ENCODE measurements at regions of chr19 and their contacts with region 1.

Region 1: DNA sequence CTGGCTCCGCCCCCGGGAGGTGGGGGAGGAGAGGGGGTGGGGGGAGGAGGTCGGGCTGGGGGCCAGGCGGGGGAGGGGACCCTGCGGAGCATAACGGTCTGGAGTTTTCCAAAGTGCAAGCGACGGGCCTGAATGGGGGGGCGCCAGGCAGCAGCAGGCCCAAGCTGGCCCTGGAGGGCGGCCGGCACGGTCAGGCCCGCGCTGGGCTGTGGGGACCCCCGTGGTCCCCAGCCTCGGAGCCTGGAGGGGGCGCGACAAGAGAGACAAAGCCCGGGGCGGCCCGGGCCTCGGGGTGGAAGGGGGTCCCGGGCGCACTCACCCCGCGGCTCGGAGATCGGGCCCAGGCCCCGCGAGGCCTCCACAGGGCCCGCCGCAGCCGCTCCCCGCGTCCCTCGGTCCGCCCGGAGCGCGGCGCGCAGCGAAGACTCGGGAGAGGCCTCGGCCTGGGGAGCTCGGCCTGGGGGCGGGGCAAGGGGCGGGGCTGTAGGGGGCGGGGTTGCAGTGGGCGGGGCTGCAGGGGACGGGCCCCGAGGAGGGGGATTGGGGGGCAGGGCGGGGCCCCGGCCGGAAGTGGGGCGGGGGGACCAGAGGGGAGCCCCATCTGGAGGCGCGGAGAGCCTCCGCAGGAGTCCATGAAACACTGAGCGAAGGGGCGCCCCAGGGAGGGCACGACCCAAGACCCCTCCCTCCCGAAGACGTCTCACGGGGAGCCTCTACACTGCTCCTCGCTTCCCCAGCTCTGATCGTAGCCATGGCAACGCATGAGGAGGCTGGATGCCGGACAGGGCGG is 47.6 kb downstream of the PTPRS start:
- DNase-seq: peak; percentile 52 to 79 (median 62)
- H3K4me3 ChIP-seq: peak overlapping the region; percentile 61 to 92 (median 82)
- H3K27ac ChIP-seq: peak overlapping the region; percentile 58 to 99 (median 93)
- H3K27me3 ChIP-seq: no peaks in the 10 kb centered on the region
- CTCF ChIP-seq: peak in 8 of 56 donors; percentile 4 to 16 (median 8)

Region 2: GRCh38 chr19:5228932-5229777 is 63.9 kb before region 1 on chr19:
- intact Hi-C with region 1: no loop called
- DNase-seq: peak in 1 of 10 donors; percentile 26
- H3K4me3 ChIP-seq: peak overlapping the region in 43 of 59 donors; percentile 7 to 56 (median 33)
- H3K27ac ChIP-seq: peak overlapping the region in 5 of 59 donors; percentile 28 to 64 (median 40)
- H3K27me3 ChIP-seq: no peaks in the 10 kb centered on the region
- CTCF ChIP-seq: no peak

Region 3: DNA sequence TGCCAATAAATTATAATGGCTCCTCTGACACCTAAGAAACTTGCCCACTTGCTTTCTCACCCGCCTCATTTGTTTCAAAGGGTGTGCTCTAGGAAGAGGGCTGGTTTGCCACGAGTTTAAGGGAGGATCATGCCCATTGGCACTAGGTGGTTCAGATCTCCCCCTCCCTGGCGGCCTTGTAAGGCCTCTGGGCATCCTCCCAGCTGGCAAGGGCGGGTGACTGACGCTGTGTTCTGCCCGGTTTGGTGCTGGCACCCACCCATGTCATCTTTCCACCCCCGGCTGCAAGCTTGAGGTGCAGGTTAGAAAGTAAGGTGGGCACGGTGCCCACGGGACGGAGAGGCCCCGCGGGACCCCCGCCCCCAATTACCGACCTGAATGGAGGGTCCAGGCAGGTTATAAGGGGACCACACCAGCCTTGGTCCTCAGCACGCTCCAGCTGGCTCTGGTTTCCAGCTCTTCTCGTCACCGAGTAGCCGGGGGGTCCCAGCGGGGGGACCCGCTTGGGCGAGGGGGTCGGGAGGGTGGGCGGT is 42.8 kb before region 1 on chr19:
- intact Hi-C with region 1: loop called in 1 of 2 experiments (anchors 5 kb)
- DNase-seq: peak; percentile 62 to 79 (median 78)
- H3K4me3 ChIP-seq: no peak overlapping the region
- H3K27ac ChIP-seq: peak overlapping the region in 5 of 59 donors; percentile 5 to 24 (median 18)
- H3K27me3 ChIP-seq: no peaks in the 10 kb centered on the region
- CTCF ChIP-seq: no peak

Region 4: GRCh38 chr19:5345895-5346386 is 52.9 kb after region 1 on chr19:
- intact Hi-C with region 1: no loop called
- DNase-seq: no peak
- H3K4me3 ChIP-seq: no peak overlapping the region
- H3K27ac ChIP-seq: no peak overlapping the region
- H3K27me3 ChIP-seq: no peaks in the 10 kb centered on the region
- CTCF ChIP-seq: no peak

Measured in dorsolateral prefrontal cortex (tissue), 120 donors.